ENCODE measurements at regions of chr12 and their contacts with region 1.

Region 1: DNA sequence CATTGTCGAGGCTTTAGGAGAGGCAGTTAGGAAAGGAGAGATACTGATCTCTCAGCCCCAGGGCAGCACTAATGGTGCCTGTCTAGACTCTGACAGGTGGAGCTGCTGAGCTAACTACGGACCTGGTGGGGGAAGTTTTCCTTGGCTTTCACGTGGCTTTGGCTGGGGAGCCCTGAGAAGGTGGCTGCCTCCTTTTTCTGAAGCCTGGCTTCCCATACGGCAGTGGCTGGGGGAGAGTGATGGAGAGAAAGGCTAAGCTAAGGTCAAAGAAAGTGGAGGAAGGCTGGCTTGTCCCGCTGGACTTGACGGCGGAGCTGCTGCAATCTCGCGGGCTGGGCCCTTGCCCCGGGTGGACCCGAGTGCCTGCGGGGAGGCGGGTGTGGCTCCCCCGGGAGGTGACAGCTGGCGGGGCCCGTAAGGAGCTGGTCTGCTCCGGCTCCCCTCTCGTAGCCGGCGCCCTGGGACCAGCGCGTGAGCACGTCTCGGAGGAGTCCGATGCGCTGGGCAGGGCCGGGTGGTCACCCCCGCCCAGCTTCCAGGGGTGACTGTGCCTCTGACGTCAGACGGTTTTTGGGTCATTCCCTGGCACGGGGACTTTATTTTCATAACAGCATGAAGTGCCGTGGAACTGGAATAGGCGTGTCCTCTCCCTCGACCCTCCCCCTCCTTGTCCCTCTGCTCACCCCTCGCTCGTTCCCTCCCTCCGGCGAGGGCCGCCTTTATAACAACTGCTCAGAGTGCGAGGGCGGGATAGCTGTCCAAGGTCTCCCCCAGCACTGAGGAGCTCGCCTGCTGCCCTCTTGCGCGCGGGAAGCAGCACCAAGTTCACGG is at the start of gene GPRC5A:
- H3K4me3 ChIP-seq: peak within 1 kb of the TSS; percentile 59
- H3K27ac ChIP-seq: peak within 1 kb of the TSS; percentile 100
- H3K4me1 ChIP-seq: peaks cover 9% of the 10 kb centered on the region
- CTCF ChIP-seq: peak; percentile 78

Region 2: DNA sequence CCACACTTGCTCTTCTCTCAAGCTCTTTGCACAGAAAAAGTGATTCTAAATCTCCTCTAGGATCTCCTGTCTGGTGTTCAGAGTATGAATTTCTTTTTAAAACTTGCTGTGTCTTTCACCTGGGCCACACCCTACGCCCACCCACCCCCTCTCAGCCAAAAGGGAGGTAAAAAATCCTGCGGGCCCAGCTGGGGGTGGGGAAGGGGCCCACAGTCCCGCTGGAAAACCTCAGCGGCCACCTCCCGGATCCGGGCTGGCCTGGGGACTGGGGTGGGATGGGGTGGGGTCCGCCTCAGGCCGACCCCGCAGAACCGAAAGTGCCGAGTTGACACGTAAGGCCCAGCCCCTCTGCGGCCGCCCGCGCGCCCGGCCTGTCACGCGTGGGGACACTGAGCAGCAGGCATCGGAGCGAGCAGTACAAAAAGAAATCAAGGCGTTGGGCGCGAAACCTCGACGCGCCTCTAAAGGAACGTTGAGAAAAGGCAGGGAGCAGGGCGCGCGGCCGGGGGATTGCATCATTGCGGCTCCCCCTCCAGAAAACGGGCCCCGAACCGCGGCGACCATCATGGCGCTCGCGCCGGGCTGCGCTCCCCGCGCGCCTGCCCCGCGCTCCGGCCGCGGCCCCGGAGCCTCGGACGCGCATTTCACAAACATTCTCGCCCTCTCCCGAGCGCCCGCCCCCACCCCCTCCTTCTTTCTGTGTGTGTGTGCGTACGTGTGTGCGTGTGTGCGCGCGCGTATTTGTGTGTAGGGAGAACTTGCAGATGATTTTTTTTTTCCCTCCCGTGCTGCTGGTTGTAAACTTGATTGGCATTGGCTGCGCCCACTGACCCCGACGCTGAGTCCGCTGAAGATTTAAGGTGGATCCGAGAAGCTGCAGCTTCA is 166.1 kb before region 1 on chr12:
- CTCF ChIA-PET with region 1: no interaction called
- POLR2A ChIA-PET with region 1: interaction called, 10 read pairs
- H3K4me3 ChIP-seq: peak overlapping the region; percentile 67
- H3K27ac ChIP-seq: peak overlapping the region; percentile 100
- H3K4me1 ChIP-seq: peaks cover 23% of the 10 kb centered on the region
- CTCF ChIP-seq: no peak

Region 3: DNA sequence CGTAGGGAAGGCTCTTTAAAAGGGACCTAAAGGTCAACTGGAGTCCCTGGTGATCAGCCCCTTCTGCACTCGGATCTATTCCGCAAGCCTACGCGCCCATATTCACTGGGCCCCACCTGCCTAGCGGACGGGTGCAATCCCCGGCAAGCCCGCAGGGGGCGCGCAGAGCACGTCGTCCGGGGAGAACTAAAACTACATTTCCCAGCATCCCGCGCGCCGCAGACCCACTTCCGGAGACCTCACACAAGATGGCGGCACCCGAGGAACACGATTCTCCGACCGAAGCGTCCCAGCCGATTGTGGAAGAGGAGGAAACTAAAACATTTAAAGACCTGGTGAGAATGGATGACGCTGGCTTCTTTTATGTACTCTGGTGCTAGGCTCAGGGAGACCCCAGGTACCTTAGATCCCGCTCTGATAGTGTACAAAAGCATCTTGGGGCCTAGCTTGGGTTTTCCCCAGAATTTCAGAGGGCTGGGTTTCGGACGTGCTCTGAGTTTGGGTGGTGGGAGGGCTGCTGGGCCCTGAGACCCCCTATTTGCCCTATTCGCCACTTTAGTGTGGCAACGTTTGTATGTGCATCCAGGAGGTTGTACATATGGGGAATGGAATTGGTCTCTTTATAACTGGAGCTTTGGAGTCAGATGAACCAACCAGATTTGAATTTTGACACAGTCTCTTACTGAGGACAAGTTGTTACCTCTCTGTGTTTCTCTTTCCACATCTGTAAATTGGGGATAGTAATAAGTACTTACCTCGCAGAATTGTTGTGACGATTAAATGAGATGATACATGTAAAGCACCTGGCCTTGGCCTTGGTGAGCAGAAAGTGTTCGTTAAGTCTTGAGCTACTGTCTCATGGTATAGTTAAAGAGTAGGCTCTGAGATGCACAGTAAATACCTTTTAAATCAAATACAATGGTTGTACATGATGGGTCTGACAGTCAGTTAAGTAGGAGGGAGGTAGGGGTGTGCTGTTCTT is 77.6 kb before region 1 on chr12 and contains the start of gene DDX47:
- CTCF ChIA-PET with region 1: interaction called, 10 read pairs
- POLR2A ChIA-PET with region 1: interaction called, 16 read pairs
- H3K4me3 ChIP-seq: peak within 1 kb of the TSS; percentile 85
- H3K27ac ChIP-seq: peak within 1 kb of the TSS; percentile 59
- H3K4me1 ChIP-seq: peaks cover 6% of the 10 kb centered on the region
- CTCF ChIP-seq: peak; percentile 96

Region 4: GRCh38 chr12:12819671-12820311 is 71.2 kb before region 1 on chr12:
- CTCF ChIA-PET with region 1: interaction called, 3 read pairs
- POLR2A ChIA-PET with region 1: interaction called, 24 read pairs
- H3K4me3 ChIP-seq: no peak overlapping the region
- H3K27ac ChIP-seq: no peak overlapping the region
- H3K4me1 ChIP-seq: peaks cover 5% of the 10 kb centered on the region; the same call in 1 of the 2 replicates
- CTCF ChIP-seq: no peak

Region 5: DNA sequence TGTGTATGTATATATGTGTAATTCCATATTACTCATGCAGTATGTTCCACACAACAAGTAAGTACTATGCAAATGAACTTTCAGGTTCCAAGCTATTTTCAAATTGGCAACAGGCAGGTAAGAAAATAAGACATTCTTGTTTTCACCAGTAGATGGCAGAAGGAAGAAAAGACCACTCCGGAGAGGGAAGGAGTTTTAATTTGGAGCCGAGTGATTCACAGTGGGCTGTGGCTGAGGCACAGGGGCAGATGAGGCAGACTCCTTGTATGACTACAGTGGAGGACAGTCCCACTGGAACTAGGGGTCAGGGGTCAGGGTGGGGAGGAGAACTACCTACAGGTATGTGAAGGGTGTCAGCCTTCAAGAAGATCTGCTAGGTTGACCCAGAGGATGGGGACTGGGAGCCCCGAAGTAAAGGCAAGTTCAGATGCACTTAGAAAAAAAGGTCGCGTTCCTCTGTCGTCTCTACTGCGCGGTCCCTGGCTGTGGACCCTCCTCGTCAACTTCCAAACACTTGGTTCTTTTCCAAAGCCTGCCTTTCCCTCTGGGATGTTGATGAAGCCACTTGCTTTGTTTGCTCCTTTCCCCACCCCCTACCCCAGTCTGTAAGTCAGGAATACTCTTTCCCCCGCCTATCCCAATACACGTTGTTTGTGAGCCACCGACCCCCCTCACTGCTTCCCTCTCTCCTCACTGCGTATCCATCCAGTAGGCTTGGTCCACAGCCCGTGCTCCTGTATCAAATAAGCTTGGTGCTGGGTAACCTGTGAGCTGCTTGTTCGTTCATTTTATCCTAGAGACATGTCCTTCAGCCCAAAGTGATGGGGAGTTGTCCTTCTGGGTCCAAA is 53.8 kb before region 1 on chr12:
- CTCF ChIA-PET with region 1: interaction called, 44 read pairs
- POLR2A ChIA-PET with region 1: interaction called, 14 read pairs
- H3K4me3 ChIP-seq: no peak overlapping the region
- H3K27ac ChIP-seq: peak overlapping the region; percentile 22; the same call in 1 of the 2 replicates
- H3K4me1 ChIP-seq: peaks cover 24% of the 10 kb centered on the region
- CTCF ChIP-seq: peak; percentile 31; the same call in 1 of the 2 replicates

Region 6: DNA sequence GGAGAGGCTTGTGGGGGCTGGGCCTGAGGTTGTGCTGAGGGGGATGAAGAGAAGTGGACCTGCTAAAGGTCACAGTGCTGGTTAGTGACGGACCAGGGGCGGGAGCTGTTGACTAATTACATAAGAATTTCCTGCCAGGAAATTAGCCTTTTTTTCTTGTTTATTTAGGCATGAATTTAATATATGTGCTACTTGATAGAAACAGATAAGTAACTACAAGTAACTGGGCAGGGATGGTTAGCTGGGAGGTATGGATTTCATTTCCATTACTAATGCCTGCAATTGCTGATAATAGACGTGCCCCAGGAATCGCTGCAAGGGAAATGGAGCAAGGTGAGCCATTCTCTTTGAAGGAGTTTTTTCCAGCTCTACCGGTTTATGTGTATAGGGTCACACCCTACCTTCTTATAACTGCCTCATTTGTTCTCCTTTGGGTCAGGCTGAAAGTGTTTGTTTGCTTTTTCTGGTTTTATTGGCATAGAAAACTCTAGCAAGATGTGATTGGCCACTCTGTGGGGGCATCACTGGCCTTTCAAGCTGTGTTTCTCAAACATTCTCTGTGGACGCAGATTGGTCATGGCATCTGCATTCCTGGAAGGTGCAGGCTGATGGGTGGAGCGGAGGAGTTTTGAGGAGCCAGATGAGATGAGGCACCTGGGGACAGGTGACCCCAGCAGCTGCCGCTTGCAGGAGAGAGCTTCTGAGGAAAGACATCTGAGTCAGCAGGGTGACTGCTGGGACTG is 18.7 kb before region 1 on chr12:
- CTCF ChIA-PET with region 1: interaction called, 10 read pairs
- POLR2A ChIA-PET with region 1: interaction called, 24 read pairs
- H3K4me3 ChIP-seq: no peak overlapping the region
- H3K27ac ChIP-seq: no peak overlapping the region
- H3K4me1 ChIP-seq: peaks cover 19% of the 10 kb centered on the region
- CTCF ChIP-seq: no peak

Region 7: DNA sequence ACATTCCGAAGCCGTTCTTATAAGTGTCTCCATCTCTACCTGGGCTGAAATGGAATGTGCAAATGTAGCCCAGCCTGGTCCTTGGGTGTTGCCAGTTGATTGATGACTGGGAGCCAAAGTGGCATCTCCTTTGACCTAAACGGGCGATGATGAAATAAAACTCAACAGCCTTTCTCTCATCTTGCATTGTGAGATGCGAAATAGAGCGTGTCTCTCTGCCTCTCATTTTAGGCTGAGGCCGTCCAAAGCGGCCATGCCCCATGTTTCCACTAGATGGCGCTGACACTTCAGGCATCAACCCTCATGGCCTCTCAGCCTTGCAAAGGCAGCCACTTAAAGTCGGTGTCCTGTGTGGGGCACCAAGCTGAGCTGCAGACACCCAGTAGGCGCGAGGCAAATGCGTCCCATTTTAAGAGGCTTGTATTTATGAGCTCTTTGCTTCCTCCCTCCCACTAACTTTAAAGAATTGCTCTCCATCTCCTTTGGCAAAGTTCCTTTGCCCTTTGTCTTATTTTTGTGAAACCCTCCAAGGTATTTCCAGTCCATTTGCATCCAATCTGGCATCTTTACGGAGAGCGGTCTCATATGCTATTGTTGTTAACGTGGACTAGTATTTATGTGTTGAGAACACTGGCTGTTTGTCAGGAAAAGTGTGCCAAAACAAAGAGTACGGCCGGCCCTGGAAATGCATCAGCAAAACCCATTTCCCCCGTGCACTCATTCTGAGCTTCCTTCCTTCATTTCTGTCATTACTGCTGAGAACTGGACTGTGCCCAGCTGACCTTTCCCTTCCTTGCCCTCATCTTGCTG is 25.3 kb after region 1 on chr12:
- CTCF ChIA-PET with region 1: interaction called, 10 read pairs
- POLR2A ChIA-PET with region 1: interaction called, 5 read pairs
- H3K4me3 ChIP-seq: no peak overlapping the region
- H3K27ac ChIP-seq: no peak overlapping the region
- H3K4me1 ChIP-seq: peaks cover 6% of the 10 kb centered on the region; the same call in 1 of the 2 replicates
- CTCF ChIP-seq: peak; percentile 95

Region 8: GRCh38 chr12:13196130-13196921 is 305.3 kb after region 1 on chr12 and contains the start of gene EMP1:
- CTCF ChIA-PET with region 1: no interaction called
- POLR2A ChIA-PET with region 1: no interaction called
- H3K4me3 ChIP-seq: peak within 1 kb of the TSS; percentile 37
- H3K27ac ChIP-seq: peak within 1 kb of the TSS; percentile 43; the same call in 1 of the 2 replicates
- H3K4me1 ChIP-seq: peaks cover 7% of the 10 kb centered on the region
- CTCF ChIP-seq: no peak